PC-9 (cell line): ENCODE measurements at regions of chr1 and their contacts with region 1.

Region 1: GRCh38 chr1:150529017-150529416 is 13.5 kb downstream of the FALEC start:
- DNase-seq: peak in 1 of 2 experiments; percentile 49
- H3K4me3 ChIP-seq: no peak overlapping the region
- H3K27ac ChIP-seq: no peak overlapping the region
- H3K4me1 ChIP-seq: no peaks in the 10 kb centered on the region
- H3K27me3 ChIP-seq: no peaks in the 10 kb centered on the region
- CTCF ChIP-seq: no peak

Region 2: GRCh38 chr1:149916193-149916897 is 612.7 kb before region 1 on chr1:
- CTCF ChIA-PET with region 1: no interaction called
- POLR2A ChIA-PET with region 1: no interaction called
- intact Hi-C with region 1: no loop called
- DNase-seq: no peak
- H3K4me3 ChIP-seq: no peak overlapping the region
- H3K27ac ChIP-seq: no peak overlapping the region
- H3K4me1 ChIP-seq: no peaks in the 10 kb centered on the region
- H3K27me3 ChIP-seq: no peaks in the 10 kb centered on the region
- CTCF ChIP-seq: no peak

Region 3: GRCh38 chr1:150383631-150384324 is 145.2 kb before region 1 on chr1:
- CTCF ChIA-PET with region 1: no interaction called
- POLR2A ChIA-PET with region 1: no interaction called
- intact Hi-C with region 1: no loop called
- DNase-seq: no peak
- H3K4me3 ChIP-seq: no peak overlapping the region
- H3K27ac ChIP-seq: no peak overlapping the region
- H3K4me1 ChIP-seq: no peaks in the 10 kb centered on the region
- H3K27me3 ChIP-seq: no peaks in the 10 kb centered on the region
- CTCF ChIP-seq: no peak

Region 4: DNA sequence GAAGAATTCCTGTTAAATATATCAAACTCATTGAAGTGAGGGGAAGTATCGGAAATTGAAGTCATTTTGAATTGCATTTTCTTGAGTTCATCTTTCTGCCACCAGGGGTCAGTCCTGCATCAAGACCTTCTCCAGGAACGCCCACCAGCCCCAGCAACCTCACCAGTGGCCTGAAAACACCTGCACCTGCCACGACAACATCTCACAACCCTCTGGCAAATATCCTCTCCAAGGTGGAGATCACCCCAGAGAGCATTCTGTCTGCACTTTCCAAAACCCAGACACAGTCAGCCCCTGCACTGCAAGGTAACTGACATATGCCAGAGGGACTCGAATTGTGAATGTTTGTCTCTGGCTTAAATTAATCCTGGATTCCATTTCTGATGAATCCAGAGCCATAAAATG is 64.6 kb before region 1 on chr1:
- CTCF ChIA-PET with region 1: no interaction called
- POLR2A ChIA-PET with region 1: no interaction called
- intact Hi-C with region 1: loop called (anchors 5 kb)
- DNase-seq: peak; percentile 35 to 49
- H3K4me3 ChIP-seq: no peak overlapping the region
- H3K27ac ChIP-seq: no peak overlapping the region
- H3K4me1 ChIP-seq: no peaks in the 10 kb centered on the region
- H3K27me3 ChIP-seq: no peaks in the 10 kb centered on the region
- CTCF ChIP-seq: peak; percentile 83

Region 5: GRCh38 chr1:150486964-150487762 is 41.9 kb before region 1 on chr1 and contains the start of gene TARS2:
- CTCF ChIA-PET with region 1: interaction called, 3 read pairs
- POLR2A ChIA-PET with region 1: no interaction called
- intact Hi-C with region 1: loop called (anchors 5 kb)
- DNase-seq: peak; percentile 95 to 97
- H3K4me3 ChIP-seq: peak within 1 kb of the TSS; percentile 81
- H3K27ac ChIP-seq: peak within 1 kb of the TSS; percentile 18; the same call in 1 of the 2 replicates
- H3K4me1 ChIP-seq: peaks cover 8% of the 10 kb centered on the region; the same call in 1 of the 2 replicates
- H3K27me3 ChIP-seq: no peaks in the 10 kb centered on the region
- CTCF ChIP-seq: peak; percentile 61
- total RNA-seq, gene TARS2: 44.8 and 46.0 TPM in 2 replicates

Region 6: GRCh38 chr1:150552093-150552691 is 23.2 kb after region 1 on chr1:
- CTCF ChIA-PET with region 1: no interaction called
- POLR2A ChIA-PET with region 1: interaction called, 18 read pairs
- intact Hi-C with region 1: no loop called
- DNase-seq: peak; percentile 89 to 91
- H3K4me3 ChIP-seq: no peak overlapping the region
- H3K27ac ChIP-seq: peak overlapping the region; percentile 65
- H3K4me1 ChIP-seq: peaks cover 46% of the 10 kb centered on the region
- H3K27me3 ChIP-seq: no peaks in the 10 kb centered on the region
- CTCF ChIP-seq: no peak

Region 7: GRCh38 chr1:150674881-150675280 is 145.9 kb after region 1 on chr1:
- CTCF ChIA-PET with region 1: no interaction called
- POLR2A ChIA-PET with region 1: no interaction called
- intact Hi-C with region 1: no loop called
- DNase-seq: no peak
- H3K4me3 ChIP-seq: no peak overlapping the region
- H3K27ac ChIP-seq: no peak overlapping the region
- H3K4me1 ChIP-seq: no peaks in the 10 kb centered on the region
- H3K27me3 ChIP-seq: no peaks in the 10 kb centered on the region
- CTCF ChIP-seq: no peak

Region 8: DNA sequence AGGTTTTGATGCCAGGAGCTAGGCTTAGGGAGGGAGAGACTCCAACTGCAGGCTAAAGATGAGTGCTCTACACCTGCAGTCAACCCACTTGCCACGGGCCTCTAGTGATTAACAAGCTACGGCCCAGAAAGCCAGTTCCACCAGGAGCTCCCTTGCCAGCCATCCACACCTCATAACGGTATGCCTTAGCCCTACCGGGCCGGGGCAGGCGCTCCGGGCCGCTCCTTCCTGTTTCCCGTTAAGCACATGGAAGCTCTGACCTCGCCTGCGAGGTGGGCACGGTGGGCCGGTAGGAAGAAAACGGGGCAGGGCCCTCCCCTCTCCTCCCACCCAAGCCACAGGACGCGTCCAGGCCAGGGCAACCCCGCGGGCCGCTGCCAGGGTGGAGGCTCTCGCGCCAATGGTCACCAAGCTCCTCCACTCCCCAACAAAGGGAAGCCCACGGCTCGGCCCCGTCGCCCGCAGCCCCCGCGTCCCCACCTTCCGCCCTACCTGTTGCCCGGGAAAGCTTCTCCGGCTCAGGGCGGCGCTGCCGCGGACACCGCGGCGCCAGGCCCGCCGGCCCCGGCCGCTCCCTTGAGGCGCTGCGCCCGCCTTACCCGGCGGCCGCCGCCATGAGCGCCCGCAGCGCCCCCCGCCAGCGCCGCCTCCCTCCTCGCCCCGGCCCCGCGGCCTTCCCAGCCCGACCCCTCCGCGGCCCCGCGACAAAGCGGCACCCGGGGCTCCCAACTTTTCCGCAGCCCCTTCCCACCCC is 445.0 kb after region 1 on chr1:
- CTCF ChIA-PET with region 1: no interaction called
- POLR2A ChIA-PET with region 1: interaction called, 12 read pairs
- intact Hi-C with region 1: no loop called
- DNase-seq: peak in 1 of 2 experiments; percentile 26
- H3K4me3 ChIP-seq: peak overlapping the region; percentile 93
- H3K27ac ChIP-seq: no peak overlapping the region
- H3K4me1 ChIP-seq: peaks cover 61% of the 10 kb centered on the region
- H3K27me3 ChIP-seq: no peaks in the 10 kb centered on the region
- CTCF ChIP-seq: no peak